ENCODE measurements at regions of chr2 and their contacts with region 1.

Region 1: GRCh38 chr2:176454893-176455811 is 185.9 kb downstream of the MTX2 start:
- DNase-seq: peak; percentile 45
- H3K4me3 ChIP-seq: no peak overlapping the region
- H3K27ac ChIP-seq: no peak overlapping the region
- H3K27me3 ChIP-seq: no peaks in the 10 kb centered on the region
- CTCF ChIP-seq: peak; percentile 92

Region 2: GRCh38 chr2:176013440-176013839 is 441.7 kb before region 1 on chr2:
- CTCF ChIA-PET with region 1: no interaction called
- POLR2A ChIA-PET with region 1: no interaction called
- DNase-seq: no peak
- H3K4me3 ChIP-seq: no peak overlapping the region
- H3K27ac ChIP-seq: no peak overlapping the region
- H3K27me3 ChIP-seq: no peaks in the 10 kb centered on the region
- CTCF ChIP-seq: no peak

Region 3: DNA sequence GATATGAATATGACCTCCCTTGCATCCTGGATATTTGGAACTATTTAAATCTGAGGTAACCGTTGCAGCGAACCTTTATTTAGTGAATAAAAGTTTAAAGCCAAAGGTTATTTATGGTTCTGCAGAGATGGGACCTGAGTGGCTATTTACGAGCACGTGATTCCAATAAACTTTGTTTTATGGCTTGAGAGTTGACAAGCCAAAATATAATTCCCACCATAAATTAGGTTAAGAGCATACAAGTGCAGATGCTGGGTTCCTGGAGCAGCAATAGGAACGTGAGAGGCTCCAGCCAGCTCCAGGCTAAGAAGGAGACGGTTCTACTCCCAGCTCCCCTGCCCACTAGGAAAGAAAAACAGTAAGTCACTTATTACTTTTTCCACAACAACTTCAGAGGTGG is 309.1 kb before region 1 on chr2:
- CTCF ChIA-PET with region 1: interaction called, 114 read pairs
- POLR2A ChIA-PET with region 1: no interaction called
- DNase-seq: no peak
- H3K4me3 ChIP-seq: no peak overlapping the region
- H3K27ac ChIP-seq: no peak overlapping the region
- H3K27me3 ChIP-seq: peaks cover 81% of the 10 kb centered on the region
- CTCF ChIP-seq: no peak

Region 4: GRCh38 chr2:176269319-176270099 is 185.6 kb before region 1 on chr2 and contains the start of gene MTX2:
- CTCF ChIA-PET with region 1: interaction called, 13 read pairs
- POLR2A ChIA-PET with region 1: no interaction called
- DNase-seq: peak; percentile 18
- H3K4me3 ChIP-seq: peak within 1 kb of the TSS; percentile 95
- H3K27ac ChIP-seq: peak within 1 kb of the TSS; percentile 58
- H3K27me3 ChIP-seq: peaks cover 2% of the 10 kb centered on the region
- CTCF ChIP-seq: no peak
- polyA plus RNA-seq, gene MTX2: 35.2 and 47.4 TPM in 2 replicates

Region 5: GRCh38 chr2:176432434-176432833 is 22.7 kb before region 1 on chr2:
- CTCF ChIA-PET with region 1: interaction called, 17 read pairs
- POLR2A ChIA-PET with region 1: no interaction called
- DNase-seq: no peak
- H3K4me3 ChIP-seq: no peak overlapping the region
- H3K27ac ChIP-seq: no peak overlapping the region
- H3K27me3 ChIP-seq: no peaks in the 10 kb centered on the region
- CTCF ChIP-seq: no peak

Region 6: GRCh38 chr2:176491172-176491904 is 36.2 kb after region 1 on chr2:
- CTCF ChIA-PET with region 1: interaction called, 26 read pairs
- POLR2A ChIA-PET with region 1: no interaction called
- DNase-seq: peak; percentile 97
- H3K4me3 ChIP-seq: no peak overlapping the region
- H3K27ac ChIP-seq: peak overlapping the region; percentile 71
- H3K27me3 ChIP-seq: peaks cover 6% of the 10 kb centered on the region
- CTCF ChIP-seq: no peak

Region 7: GRCh38 chr2:176653479-176654443 is 198.6 kb after region 1 on chr2:
- CTCF ChIA-PET with region 1: interaction called, 19 read pairs
- POLR2A ChIA-PET with region 1: no interaction called
- DNase-seq: peak; percentile 4
- H3K4me3 ChIP-seq: no peak overlapping the region
- H3K27ac ChIP-seq: no peak overlapping the region
- H3K27me3 ChIP-seq: peaks cover 4% of the 10 kb centered on the region
- CTCF ChIP-seq: peak; percentile 75

Measured in AG04450 (cell line).